Caco-2 (cell line): ENCODE measurements at regions of chr4 and their contacts with region 1.

Region 1: GRCh38 chr4:188439641-188440311 is 300.5 kb downstream of the TRIML1 start:
- DNase-seq: no peak
- H3K4me3 ChIP-seq: no peak overlapping the region
- H3K4me3 Mint-ChIP-seq: no peak overlapping the region
- H3K27ac Mint-ChIP-seq: peak overlapping the region; percentile 9
- H3K4me1 ChIP-seq: peaks cover 23% of the 10 kb centered on the region
- H3K4me1 Mint-ChIP-seq: peaks cover 12% of the 10 kb centered on the region
- H3K27me3 ChIP-seq: no peaks in the 10 kb centered on the region
- H3K27me3 Mint-ChIP-seq: no peaks in the 10 kb centered on the region
- CTCF ChIP-seq: no peak

Region 2: GRCh38 chr4:188021548-188022249 is 418.1 kb before region 1 on chr4:
- CTCF ChIA-PET with region 1: no interaction called
- POLR2A ChIA-PET with region 1: no interaction called
- intact Hi-C with region 1: no loop called
- DNase-seq: peak; percentile 88 to 94
- H3K4me3 ChIP-seq: no peak overlapping the region
- H3K4me3 Mint-ChIP-seq: peak overlapping the region; percentile 41
- H3K27ac Mint-ChIP-seq: peak overlapping the region; percentile 97
- H3K4me1 ChIP-seq: peaks cover 44% of the 10 kb centered on the region
- H3K4me1 Mint-ChIP-seq: peaks cover 24% of the 10 kb centered on the region
- H3K27me3 ChIP-seq: no peaks in the 10 kb centered on the region
- H3K27me3 Mint-ChIP-seq: no peaks in the 10 kb centered on the region
- CTCF ChIP-seq: no peak

Region 3: DNA sequence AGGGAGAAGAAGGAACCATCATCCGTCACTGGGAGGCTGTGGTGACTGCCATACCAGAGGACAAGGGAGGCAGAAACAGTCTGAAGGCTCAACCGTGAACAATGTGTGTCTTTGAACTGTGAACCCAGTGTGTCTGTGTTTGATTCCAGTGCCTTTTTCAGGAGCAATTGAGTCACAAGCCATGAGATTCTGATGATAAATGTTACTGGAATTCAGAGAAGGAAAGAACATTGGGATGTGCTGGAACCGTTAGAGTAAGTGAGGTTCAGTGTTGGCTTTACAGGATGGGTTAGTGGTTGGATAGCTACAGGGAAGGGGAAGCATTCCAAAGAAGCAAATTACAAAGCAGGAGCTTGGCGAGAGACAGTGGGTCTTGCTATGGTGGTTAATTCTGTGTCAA is 163.9 kb after region 1 on chr4:
- CTCF ChIA-PET with region 1: no interaction called
- POLR2A ChIA-PET with region 1: no interaction called
- intact Hi-C with region 1: loop called (anchors 10 kb)
- DNase-seq: no peak
- H3K4me3 ChIP-seq: no peak overlapping the region
- H3K4me3 Mint-ChIP-seq: no peak overlapping the region
- H3K27ac Mint-ChIP-seq: no peak overlapping the region
- H3K4me1 ChIP-seq: peaks cover 17% of the 10 kb centered on the region
- H3K4me1 Mint-ChIP-seq: peaks cover 8% of the 10 kb centered on the region
- H3K27me3 ChIP-seq: no peaks in the 10 kb centered on the region
- H3K27me3 Mint-ChIP-seq: no peaks in the 10 kb centered on the region
- CTCF ChIP-seq: no peak